ENCODE measurements at regions of chr4 and their contacts with region 1.

Region 1: GRCh38 chr4:156378033-156378665 is 424.5 kb upstream of the CTSO start:
- DNase-seq: peak; percentile 2
- ATAC-seq: peak; percentile 49; the same call in 2 of the 3 replicates
- H3K4me3 ChIP-seq: no peak overlapping the region
- H3K27ac ChIP-seq: no peak overlapping the region
- H3K4me1 ChIP-seq: no peaks in the 10 kb centered on the region
- H3K27me3 ChIP-seq: no peaks in the 10 kb centered on the region
- CTCF ChIP-seq: peak; percentile 26; the same call in 1 of the 2 replicates
- EP300 ChIP-seq: no peak
- POLR2A ChIP-seq: no peak
- RAD21 ChIP-seq: no peak

Region 2: DNA sequence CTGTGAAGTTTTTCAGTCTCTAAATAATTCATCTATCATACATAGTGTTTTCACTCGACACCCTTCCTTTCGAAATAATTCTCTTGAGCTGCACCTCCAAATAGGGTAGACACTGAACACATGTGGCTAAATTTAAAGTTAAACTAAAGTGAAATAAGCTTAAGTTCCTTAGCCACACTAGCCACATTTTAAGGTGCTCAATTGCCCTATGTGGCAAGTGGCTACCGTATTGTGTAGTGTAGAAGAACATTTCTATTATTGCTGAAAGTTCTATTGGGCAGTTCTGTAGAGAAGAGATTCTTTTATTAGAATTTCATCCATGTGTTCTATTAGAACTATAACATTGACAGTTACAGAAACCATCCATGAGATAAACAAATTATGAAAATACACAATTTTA is 317.5 kb before region 1 on chr4:
- CTCF ChIA-PET with region 1: no interaction called
- POLR2A ChIA-PET with region 1: no interaction called
- in situ Hi-C with region 1: no loop called
- intact Hi-C with region 1: loop called (anchors 5 kb)
- DNase-seq: no peak
- ATAC-seq: no peak
- H3K4me3 ChIP-seq: no peak overlapping the region
- H3K27ac ChIP-seq: no peak overlapping the region
- H3K4me1 ChIP-seq: no peaks in the 10 kb centered on the region
- H3K27me3 ChIP-seq: no peaks in the 10 kb centered on the region
- CTCF ChIP-seq: no peak
- EP300 ChIP-seq: no peak
- POLR2A ChIP-seq: no peak
- RAD21 ChIP-seq: no peak